Calu3 (cell line): ENCODE measurements at regions of chr20 and their contacts with region 1.

Region 1: GRCh38 chr20:37178839-37179670 is at the starts of genes MROH8 and RPN2:
- DNase-seq: peak; percentile 100
- H3K4me3 Mint-ChIP-seq: peak within 1 kb of the TSS; percentile 77
- H3K27ac Mint-ChIP-seq: peak within 1 kb of the TSS; percentile 100
- H3K4me1 Mint-ChIP-seq: peaks cover 30% of the 10 kb centered on the region
- H3K27me3 Mint-ChIP-seq: no peaks in the 10 kb centered on the region
- CTCF ChIP-seq: no peak
- total RNA-seq, gene MROH8: 1.4 and 2.7 TPM in 2 replicates
- total RNA-seq, gene RPN2: 508 and 522 TPM in 2 replicates

Region 2: DNA sequence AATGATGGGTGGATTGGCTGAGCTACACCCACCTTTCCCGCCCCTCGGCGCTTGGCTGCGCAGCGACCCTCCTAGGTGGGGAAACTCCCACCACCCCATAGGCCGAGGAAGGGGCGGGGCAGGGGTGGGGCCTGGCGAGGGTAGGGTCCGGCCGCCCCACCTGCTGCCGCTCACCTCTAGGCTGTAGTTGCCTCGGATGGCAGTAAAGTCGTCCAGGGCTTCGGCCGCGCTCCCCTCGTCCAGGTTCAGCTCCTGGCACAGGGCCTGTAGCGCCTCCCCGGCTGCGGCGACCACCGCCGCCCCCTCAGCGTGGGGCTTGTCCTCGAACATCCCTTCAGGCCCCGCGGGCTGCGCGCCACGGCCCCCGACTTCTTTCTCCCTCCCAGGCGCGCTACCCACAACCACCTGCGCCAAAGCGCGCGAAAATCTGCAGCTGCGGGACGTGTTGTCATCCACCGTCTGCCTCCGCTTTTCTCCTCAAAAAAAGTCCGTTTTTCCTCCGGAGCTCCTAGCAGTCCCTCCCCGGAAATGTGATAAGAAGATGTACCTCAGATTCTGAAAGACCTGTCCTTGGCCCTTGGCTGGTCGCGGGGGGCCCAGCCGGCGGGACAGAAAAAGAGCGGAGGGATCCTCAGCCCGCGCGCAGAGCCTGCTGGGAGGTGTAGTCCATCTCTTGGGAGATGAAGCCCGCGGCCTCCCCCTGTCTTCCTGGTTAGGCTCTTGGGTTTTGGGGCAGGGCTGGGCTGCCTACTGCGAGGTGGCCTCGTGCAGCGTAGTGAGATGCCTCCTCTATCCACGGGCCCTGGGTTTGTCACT is 83.2 kb before region 1 on chr20 and contains the start of gene RBL1:
- CTCF ChIA-PET with region 1: interaction called, 10 read pairs
- intact Hi-C with region 1: loop called (anchors 5 kb)
- DNase-seq: peak; percentile 91
- H3K4me3 Mint-ChIP-seq: peak within 1 kb of the TSS; percentile 82
- H3K27ac Mint-ChIP-seq: peak within 1 kb of the TSS; percentile 88
- H3K4me1 Mint-ChIP-seq: peaks cover 24% of the 10 kb centered on the region
- H3K27me3 Mint-ChIP-seq: peaks cover 15% of the 10 kb centered on the region
- CTCF ChIP-seq: peak; percentile 12
- total RNA-seq, gene RBL1: 20.3 and 21.5 TPM in 2 replicates

Region 3: GRCh38 chr20:37192137-37192854 is 13.2 kb after region 1 on chr20:
- CTCF ChIA-PET with region 1: interaction called, 19 read pairs
- intact Hi-C with region 1: no loop called
- DNase-seq: peak; percentile 90
- H3K4me3 Mint-ChIP-seq: no peak overlapping the region
- H3K27ac Mint-ChIP-seq: peak overlapping the region; percentile 11
- H3K4me1 Mint-ChIP-seq: peaks cover 49% of the 10 kb centered on the region
- H3K27me3 Mint-ChIP-seq: no peaks in the 10 kb centered on the region
- CTCF ChIP-seq: peak; percentile 99

Region 4: GRCh38 chr20:37226889-37227288 is 47.8 kb after region 1 on chr20:
- CTCF ChIA-PET with region 1: no interaction called
- intact Hi-C with region 1: no loop called
- DNase-seq: no peak
- H3K4me3 Mint-ChIP-seq: no peak overlapping the region
- H3K27ac Mint-ChIP-seq: no peak overlapping the region
- H3K4me1 Mint-ChIP-seq: no peaks in the 10 kb centered on the region
- H3K27me3 Mint-ChIP-seq: no peaks in the 10 kb centered on the region
- CTCF ChIP-seq: no peak